Sigmoid colon (tissue), 7 donors: ENCODE measurements at regions of chr1 and their contacts with region 1.

Region 1: DNA sequence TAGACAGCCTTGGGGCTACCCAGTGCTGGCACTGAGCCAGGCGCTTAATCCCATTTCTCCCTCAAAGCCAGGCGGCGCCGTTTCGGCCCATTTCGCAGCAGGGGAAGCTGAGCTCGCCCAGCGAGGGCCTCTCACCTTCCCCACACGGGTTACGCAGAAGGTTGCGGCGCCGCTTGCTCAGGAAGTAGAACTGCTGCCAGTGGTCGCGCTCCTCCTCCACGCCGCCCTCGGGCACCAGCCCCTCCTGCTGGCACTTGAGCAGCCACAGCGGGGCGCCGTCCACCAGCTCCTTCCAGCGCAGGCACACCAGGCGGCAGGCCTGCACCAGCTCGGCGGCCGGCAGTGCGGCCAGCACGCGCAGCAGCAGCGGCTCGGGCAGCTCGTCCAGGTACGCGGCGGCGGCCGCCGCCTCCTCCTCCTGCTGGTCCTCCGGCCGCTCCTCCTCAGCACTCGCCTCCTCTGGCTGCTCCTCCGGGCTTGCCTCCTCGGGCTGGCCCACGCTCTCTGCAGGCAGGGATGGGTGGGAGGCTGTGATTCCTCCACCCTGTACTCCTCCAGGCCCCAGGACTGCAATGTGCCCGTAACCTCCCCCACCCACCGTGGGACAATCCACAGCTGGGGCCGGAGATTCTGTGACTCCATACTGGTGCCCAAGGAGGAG is 3.8 kb downstream of the FBXO2 start:
- DNase-seq: peak; percentile 87
- H3K4me3 ChIP-seq: peak overlapping the region in 2 of 4 donors; percentile 1 to 20
- H3K27ac ChIP-seq: no peak overlapping the region
- H3K4me1 ChIP-seq: peaks cover 0 to 44% (median 38%) of the 10 kb centered on the region in 4 donors
- H3K27me3 ChIP-seq: peaks cover 7 to 39% (median 32%) of the 10 kb centered on the region in 3 donors
- CTCF ChIP-seq: peak; percentile 37 to 61 (median 50)
- EP300 ChIP-seq: no peak
- POLR2A ChIP-seq: no peak

Region 2: DNA sequence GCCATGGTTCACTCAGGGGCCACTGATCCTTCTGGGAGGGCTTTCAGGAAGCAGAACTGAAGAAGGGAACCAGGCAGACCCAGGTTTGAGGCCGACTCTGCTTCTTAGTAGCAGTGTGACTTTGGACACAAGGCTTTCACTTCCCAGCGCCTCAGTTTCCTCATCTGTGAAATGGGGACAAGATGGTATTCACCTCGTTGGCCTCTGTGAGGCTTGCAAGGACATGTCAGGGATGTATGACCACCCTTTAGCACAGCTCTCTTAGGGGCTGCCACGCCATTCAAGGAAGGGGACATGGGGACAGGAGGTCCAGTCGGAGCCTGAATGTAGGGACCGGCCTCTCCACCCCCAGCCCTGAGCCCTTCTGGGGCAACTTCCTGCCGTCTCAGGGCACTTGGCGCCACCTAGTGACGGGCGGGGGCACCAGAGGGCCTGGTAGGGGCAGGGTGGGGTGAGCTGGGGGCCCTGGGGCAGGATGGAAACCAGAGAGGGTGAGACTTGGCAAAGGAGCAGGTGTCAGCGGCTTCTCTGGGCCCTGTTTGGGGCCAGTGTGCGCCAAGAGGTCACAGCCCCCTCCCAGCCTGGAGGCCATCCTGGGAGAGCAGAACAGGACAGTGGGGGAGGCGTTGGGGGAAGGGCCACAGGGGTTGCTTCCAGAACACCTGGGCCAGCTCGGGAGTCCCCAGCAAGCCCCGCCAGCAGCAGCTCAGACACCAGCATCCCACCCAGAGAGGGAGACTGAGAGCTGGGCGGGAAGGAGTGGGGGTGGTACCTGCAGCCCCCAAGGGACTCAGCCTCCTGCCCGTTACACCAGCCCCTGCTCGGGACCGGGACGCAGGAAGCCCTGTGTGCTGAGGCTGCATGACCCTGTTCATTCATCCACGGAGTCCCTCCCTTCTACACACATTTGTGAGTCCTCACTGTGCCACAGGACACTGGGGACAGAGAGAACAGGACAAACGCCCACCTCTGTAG is 740.5 kb before region 1 on chr1:
- intact Hi-C with region 1: no loop called
- DNase-seq: no peak
- H3K4me3 ChIP-seq: no peak overlapping the region
- H3K27ac ChIP-seq: no peak overlapping the region
- H3K4me1 ChIP-seq: no peaks in the 10 kb centered on the region
- H3K27me3 ChIP-seq: no peaks in the 10 kb centered on the region
- CTCF ChIP-seq: peak in 2 of 4 experiments; percentile 9 to 57
- EP300 ChIP-seq: no peak
- POLR2A ChIP-seq: no peak

Region 3: DNA sequence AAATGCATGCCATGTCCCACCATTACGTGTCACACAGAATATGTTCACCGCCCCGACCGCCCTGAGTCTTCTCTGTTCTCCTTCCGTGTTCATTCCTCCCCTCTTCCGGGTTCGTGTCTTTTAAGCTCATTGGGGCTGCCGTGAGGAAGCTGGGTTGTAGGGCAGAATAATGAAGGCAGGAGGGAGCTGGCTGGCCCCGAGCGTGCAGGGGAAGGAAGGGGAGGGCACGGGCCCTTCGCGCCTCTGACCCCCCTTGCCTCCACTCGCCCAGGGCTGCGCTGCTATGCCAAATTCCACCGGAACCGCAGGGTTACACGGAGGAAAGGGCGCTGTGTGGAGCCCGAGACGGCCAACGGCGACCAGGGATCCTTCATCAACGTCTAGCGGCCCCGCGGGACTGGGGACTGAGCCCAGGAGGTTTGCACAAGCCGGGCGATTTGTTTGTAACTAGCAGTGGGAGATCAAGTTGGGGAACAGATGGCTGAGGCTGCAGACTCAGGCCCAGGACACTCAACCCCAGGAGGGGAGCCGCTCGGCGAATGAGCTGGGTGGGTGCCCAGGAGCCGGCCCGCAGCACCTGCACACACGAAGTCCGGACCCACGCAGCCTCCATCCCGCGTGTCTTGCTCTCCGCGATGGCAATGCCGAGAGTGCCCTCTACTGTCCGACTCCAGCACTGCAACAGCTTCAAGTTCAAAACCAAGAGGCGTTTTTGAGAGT is 69.0 kb after region 1 on chr1:
- intact Hi-C with region 1: loop called (anchors 2 kb)
- DNase-seq: peak; percentile 91
- H3K4me3 ChIP-seq: peak overlapping the region in 3 of 4 donors; percentile 34 to 43 (median 42)
- H3K27ac ChIP-seq: peak overlapping the region; percentile 25 to 53 (median 46)
- H3K4me1 ChIP-seq: peaks cover 0 to 11% (median 9%) of the 10 kb centered on the region in 4 donors
- H3K27me3 ChIP-seq: peaks cover 0 to 5% (median 0%) of the 10 kb centered on the region in 3 donors
- CTCF ChIP-seq: peak; percentile 76 to 98 (median 92)
- EP300 ChIP-seq: no peak
- POLR2A ChIP-seq: no peak

Region 4: GRCh38 chr1:11735854-11736745 is 85.6 kb after region 1 on chr1 and contains the start of gene AGTRAP:
- intact Hi-C with region 1: loop called (anchors 5 kb)
- DNase-seq: peak; percentile 99
- H3K4me3 ChIP-seq: peak within 1 kb of the TSS; percentile 72 to 96 (median 86)
- H3K27ac ChIP-seq: peak within 1 kb of the TSS; percentile 88 to 90 (median 88)
- H3K4me1 ChIP-seq: peaks cover 0 to 41% (median 33%) of the 10 kb centered on the region in 4 donors
- H3K27me3 ChIP-seq: no peaks in the 10 kb centered on the region
- CTCF ChIP-seq: peak in 1 of 4 experiments; percentile 10
- EP300 ChIP-seq: no peak
- POLR2A ChIP-seq: peak in 1 of 2 donors; percentile 22
- total RNA-seq, gene AGTRAP: 22.8 to 58.3 (median 33.6) TPM

Region 5: GRCh38 chr1:11784993-11785769 is 134.7 kb after region 1 on chr1:
- intact Hi-C with region 1: loop called (anchors 5 kb)
- DNase-seq: peak; percentile 87
- H3K4me3 ChIP-seq: peak overlapping the region; percentile 1 to 40 (median 24)
- H3K27ac ChIP-seq: peak overlapping the region in 3 of 4 donors; percentile 15 to 54 (median 45)
- H3K4me1 ChIP-seq: peaks cover 0 to 57% (median 48%) of the 10 kb centered on the region in 4 donors
- H3K27me3 ChIP-seq: no peaks in the 10 kb centered on the region
- CTCF ChIP-seq: peak; percentile 67 to 87 (median 76)
- EP300 ChIP-seq: no peak
- POLR2A ChIP-seq: no peak

Region 6: GRCh38 chr1:11805447-11806306 is 155.2 kb after region 1 on chr1 and contains the starts of genes CLCN6 and MTHFR:
- intact Hi-C with region 1: loop called (anchors 5 kb)
- DNase-seq: peak; percentile 100
- H3K4me3 ChIP-seq: peak within 1 kb of the TSS; percentile 77 to 90 (median 80)
- H3K27ac ChIP-seq: peak within 1 kb of the TSS; percentile 95 to 99 (median 97)
- H3K4me1 ChIP-seq: peaks cover 0 to 61% (median 60%) of the 10 kb centered on the region in 4 donors
- H3K27me3 ChIP-seq: no peaks in the 10 kb centered on the region
- CTCF ChIP-seq: no peak
- EP300 ChIP-seq: peak in 2 of 4 donors; percentile 34 to 96
- POLR2A ChIP-seq: peak; percentile 92 to 98
- total RNA-seq, gene CLCN6: 12.1 to 19.7 (median 16.1) TPM
- total RNA-seq, gene MTHFR: 16.8 to 38.3 (median 27.9) TPM

Region 7: DNA sequence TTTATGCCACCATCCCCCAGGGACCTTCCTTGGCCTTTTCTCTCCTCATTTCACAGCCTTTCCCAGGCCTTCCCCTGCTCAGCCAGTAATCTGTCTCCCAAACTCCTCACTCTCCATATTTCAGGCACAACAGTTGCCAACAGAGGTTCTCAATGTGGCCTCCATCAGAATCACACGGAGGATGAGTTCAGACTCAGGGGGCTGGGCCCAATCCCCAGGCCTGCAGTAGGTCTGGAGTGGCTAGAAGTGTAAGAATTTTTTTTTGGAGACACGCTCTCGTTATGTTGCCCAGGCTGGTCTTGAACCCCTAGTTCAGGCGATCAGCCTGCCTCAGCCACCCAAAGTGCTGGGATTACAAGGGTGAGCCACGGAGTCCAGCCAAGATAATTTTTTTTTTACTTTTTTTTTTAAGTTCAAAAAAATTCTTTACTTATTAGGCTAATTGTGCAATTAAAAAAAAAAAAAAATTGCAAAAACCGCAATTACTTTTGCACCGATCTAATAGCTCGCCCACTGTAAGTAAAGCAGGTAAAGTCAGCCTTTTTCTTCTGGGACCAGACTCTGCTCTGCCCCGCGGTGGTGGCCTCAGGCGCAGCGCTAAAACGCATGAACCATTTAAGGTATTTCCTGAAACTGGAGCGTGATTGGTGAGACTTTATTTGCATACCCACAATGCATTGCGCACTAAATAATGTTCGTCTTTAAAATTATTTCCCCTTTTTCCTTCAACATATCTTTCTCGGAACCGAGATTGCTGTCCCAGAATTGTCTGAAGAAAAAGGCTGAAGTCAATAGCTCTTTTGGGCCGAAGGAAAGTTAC is 257.0 kb after region 1 on chr1:
- intact Hi-C with region 1: loop called (anchors 5 kb)
- DNase-seq: peak; percentile 97
- H3K4me3 ChIP-seq: peak overlapping the region in 3 of 4 donors; percentile 61 to 74 (median 65)
- H3K27ac ChIP-seq: peak overlapping the region; percentile 97 to 99 (median 98)
- H3K4me1 ChIP-seq: peaks cover 0 to 7% (median 0%) of the 10 kb centered on the region in 4 donors
- H3K27me3 ChIP-seq: no peaks in the 10 kb centered on the region
- CTCF ChIP-seq: peak; percentile 69 to 85 (median 72)
- EP300 ChIP-seq: no peak
- POLR2A ChIP-seq: no peak